ENCODE measurements at regions of chrX and their contacts with region 1.

Region 1: GRCh38 chrX:130916636-130917422 is 13.8 kb upstream of the ENOX2 start:
- DNase-seq: peak in 8 of 9 experiments; percentile 0 to 74 (median 34)
- ATAC-seq: peak; percentile 58
- H3K4me3 ChIP-seq: no peak overlapping the region
- H3K4me3 Mint-ChIP-seq: no peak overlapping the region
- H3K27ac ChIP-seq: no peak overlapping the region
- H3K27ac Mint-ChIP-seq: no peak overlapping the region
- H3K4me1 ChIP-seq: no peaks in the 10 kb centered on the region
- H3K4me1 Mint-ChIP-seq: no peaks in the 10 kb centered on the region
- H3K27me3 ChIP-seq: no peaks in the 10 kb centered on the region
- H3K27me3 Mint-ChIP-seq: no peaks in the 10 kb centered on the region
- CTCF ChIP-seq: peak; percentile 55

Region 2: DNA sequence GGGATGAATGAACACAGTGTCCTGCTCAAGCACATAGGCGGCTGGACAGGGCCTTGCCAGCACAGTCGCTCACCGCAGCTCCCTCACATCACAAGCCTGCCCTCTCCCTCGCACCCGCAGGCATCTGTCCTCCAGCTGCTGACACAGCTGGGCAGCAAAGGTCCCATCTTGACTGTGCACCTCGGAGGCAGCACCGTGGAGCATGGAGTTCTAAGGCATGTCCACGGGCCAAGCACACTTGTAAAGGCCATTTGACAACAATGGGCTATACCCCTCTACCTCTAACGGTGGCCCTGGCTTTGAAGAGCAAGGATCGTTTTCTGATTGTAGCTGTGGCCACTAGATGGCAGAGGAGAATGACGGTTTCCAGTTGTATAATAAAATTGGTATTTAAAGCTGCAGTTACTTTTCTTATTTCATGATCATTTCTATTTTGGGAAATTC is 1315.8 kb before region 1 on chrX:
- CTCF ChIA-PET with region 1: no interaction called
- POLR2A ChIA-PET with region 1: no interaction called
- intact Hi-C with region 1: loop called in 1 of 2 experiments (anchors 2 kb)
- DNase-seq: peak in 4 of 9 experiments; percentile 4 to 54 (median 28)
- ATAC-seq: no peak
- H3K4me3 ChIP-seq: no peak overlapping the region
- H3K4me3 Mint-ChIP-seq: no peak overlapping the region
- H3K27ac ChIP-seq: no peak overlapping the region
- H3K27ac Mint-ChIP-seq: no peak overlapping the region
- H3K4me1 ChIP-seq: peaks cover 11% of the 10 kb centered on the region
- H3K4me1 Mint-ChIP-seq: peaks cover 21% of the 10 kb centered on the region
- H3K27me3 ChIP-seq: no peaks in the 10 kb centered on the region
- H3K27me3 Mint-ChIP-seq: no peaks in the 10 kb centered on the region
- CTCF ChIP-seq: peak; percentile 35

Region 3: DNA sequence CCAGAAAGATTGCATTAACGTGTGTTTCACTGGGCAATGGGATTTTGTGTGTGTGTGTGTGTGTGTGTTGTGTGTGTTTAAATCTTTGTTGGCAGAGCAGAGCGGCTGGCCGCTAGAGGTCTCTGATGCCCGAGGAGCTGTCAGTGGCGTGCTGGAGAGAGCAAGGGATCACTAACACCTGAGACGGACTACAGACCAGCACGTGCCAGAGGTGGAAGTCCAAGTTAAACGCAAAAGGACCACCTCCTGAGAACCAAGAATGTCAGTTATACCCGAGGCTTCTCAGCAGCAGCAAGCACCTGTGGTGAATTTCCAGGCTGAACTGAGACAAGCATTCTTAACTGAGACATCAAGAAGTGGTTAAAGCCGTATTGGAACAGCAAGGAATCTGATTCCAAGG is 586.1 kb before region 1 on chrX:
- CTCF ChIA-PET with region 1: interaction called, 18 read pairs
- POLR2A ChIA-PET with region 1: no interaction called
- intact Hi-C with region 1: loop called (anchors 1 to 2 kb)
- DNase-seq: peak in 7 of 9 experiments; percentile 4 to 53 (median 34)
- ATAC-seq: peak; percentile 51
- H3K4me3 ChIP-seq: no peak overlapping the region
- H3K4me3 Mint-ChIP-seq: no peak overlapping the region
- H3K27ac ChIP-seq: no peak overlapping the region
- H3K27ac Mint-ChIP-seq: no peak overlapping the region
- H3K4me1 ChIP-seq: no peaks in the 10 kb centered on the region
- H3K4me1 Mint-ChIP-seq: no peaks in the 10 kb centered on the region
- H3K27me3 ChIP-seq: no peaks in the 10 kb centered on the region
- H3K27me3 Mint-ChIP-seq: peaks cover 10% of the 10 kb centered on the region
- CTCF ChIP-seq: no peak

Region 4: DNA sequence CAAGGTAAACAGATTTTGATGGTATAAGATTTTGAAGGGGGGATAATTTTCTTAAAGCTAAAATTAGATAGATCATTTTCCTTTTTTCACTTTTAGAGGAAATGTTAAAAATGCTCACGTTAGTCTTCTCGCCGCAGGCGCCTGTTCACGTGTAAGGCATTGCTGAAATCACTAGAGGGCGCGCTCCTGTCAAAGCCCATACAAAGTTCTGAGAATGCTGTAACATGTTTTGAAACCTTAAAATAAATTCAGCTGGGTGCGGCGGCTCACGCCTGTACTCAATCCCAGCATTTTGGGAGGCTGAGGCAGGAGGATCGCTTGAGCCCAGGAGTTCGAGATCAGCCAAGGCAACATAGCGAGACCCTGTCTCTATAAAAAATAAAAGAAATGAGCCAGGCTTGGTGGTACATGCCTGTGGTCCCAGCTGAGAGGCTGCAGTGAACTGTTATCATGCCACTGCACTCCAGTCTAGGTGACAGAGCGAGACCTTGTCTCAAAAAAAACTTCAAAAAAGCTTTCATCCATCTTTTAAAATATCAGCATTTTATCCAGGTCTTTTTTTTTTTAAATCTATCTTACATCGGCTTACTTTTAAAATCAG is 377.0 kb before region 1 on chrX:
- CTCF ChIA-PET with region 1: interaction called, 8 read pairs
- POLR2A ChIA-PET with region 1: no interaction called
- intact Hi-C with region 1: loop called in 1 of 2 experiments (anchors 2 kb)
- DNase-seq: peak in 6 of 9 experiments; percentile 4 to 46 (median 22)
- ATAC-seq: no peak
- H3K4me3 ChIP-seq: no peak overlapping the region
- H3K4me3 Mint-ChIP-seq: no peak overlapping the region
- H3K27ac ChIP-seq: no peak overlapping the region
- H3K27ac Mint-ChIP-seq: no peak overlapping the region
- H3K4me1 ChIP-seq: no peaks in the 10 kb centered on the region
- H3K4me1 Mint-ChIP-seq: no peaks in the 10 kb centered on the region
- H3K27me3 ChIP-seq: no peaks in the 10 kb centered on the region
- H3K27me3 Mint-ChIP-seq: no peaks in the 10 kb centered on the region
- CTCF ChIP-seq: peak; percentile 51

Region 5: DNA sequence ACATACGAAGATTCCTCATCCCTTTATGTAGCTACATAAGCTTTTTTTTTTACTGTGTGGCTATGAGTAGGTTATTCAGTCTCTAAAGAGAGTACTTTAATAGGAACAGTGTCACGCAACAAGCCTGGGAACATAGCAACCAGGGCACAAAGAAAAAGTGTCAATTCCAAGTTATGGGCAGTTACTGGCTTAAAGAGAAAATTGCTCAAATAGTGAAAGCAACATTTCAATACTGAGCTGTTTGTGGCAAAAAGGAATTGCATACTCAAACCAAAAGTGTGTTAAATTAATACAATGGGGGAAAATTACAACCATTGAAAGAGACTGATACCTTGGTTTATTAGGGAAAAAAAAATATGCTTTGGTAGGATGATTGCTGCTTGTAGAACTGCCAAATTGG is 27.4 kb after region 1 on chrX:
- CTCF ChIA-PET with region 1: no interaction called
- POLR2A ChIA-PET with region 1: no interaction called
- intact Hi-C with region 1: no loop called
- DNase-seq: no peak
- ATAC-seq: no peak
- H3K4me3 ChIP-seq: no peak overlapping the region
- H3K4me3 Mint-ChIP-seq: no peak overlapping the region
- H3K27ac ChIP-seq: no peak overlapping the region
- H3K27ac Mint-ChIP-seq: no peak overlapping the region
- H3K4me1 ChIP-seq: no peaks in the 10 kb centered on the region
- H3K4me1 Mint-ChIP-seq: no peaks in the 10 kb centered on the region
- H3K27me3 ChIP-seq: no peaks in the 10 kb centered on the region
- H3K27me3 Mint-ChIP-seq: no peaks in the 10 kb centered on the region
- CTCF ChIP-seq: no peak

Measured in CD8-positive, alpha-beta T cell (primary cell).